Transverse colon (tissue), 4 donors: ENCODE measurements at regions of chr11 and their contacts with region 1.

Region 1: GRCh38 chr11:114377612-114378267 is 22.6 kb downstream of the C11orf71 start:
- DNase-seq: no peak
- H3K4me3 ChIP-seq: no peak overlapping the region
- H3K27ac ChIP-seq: no peak overlapping the region
- H3K4me1 ChIP-seq: peaks cover 0 to 3% (median 0%) of the 10 kb centered on the region in 4 donors
- H3K27me3 ChIP-seq: peaks cover 5% of the 10 kb centered on the region
- CTCF ChIP-seq: no peak
- EP300 ChIP-seq: no peak
- POLR2A ChIP-seq: no peak

Region 2: GRCh38 chr11:114449845-114450244 is 72.1 kb after region 1 on chr11:
- in situ Hi-C with region 1: no loop called
- intact Hi-C with region 1: loop called (anchors 2 kb)
- DNase-seq: no peak
- H3K4me3 ChIP-seq: no peak overlapping the region
- H3K27ac ChIP-seq: no peak overlapping the region
- H3K4me1 ChIP-seq: peaks cover 0 to 16% (median 8%) of the 10 kb centered on the region in 4 donors
- H3K27me3 ChIP-seq: no peaks in the 10 kb centered on the region
- CTCF ChIP-seq: no peak
- EP300 ChIP-seq: no peak
- POLR2A ChIP-seq: no peak